ENCODE measurements at regions of chr7 and their contacts with region 1.

Region 1: DNA sequence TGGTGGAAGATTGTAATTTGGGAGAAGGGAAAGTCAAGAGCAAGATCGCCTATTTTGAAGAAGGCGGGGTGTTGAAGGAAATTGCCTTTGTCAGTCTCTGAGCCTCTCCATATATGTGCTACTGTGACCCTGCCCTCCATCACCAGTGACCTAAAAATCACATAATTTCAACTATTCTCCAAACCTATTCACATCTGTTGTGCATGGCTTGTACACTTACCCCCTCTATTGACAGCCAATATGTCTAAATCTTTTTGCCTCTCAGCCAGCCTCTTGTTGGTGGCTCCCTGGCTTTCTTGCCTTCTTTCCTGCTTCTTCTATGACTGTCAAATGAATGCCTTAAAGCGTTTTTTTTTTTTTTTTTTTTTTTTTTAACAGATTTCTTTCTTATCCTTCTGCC is 295.6 kb downstream of the AUTS2 start:
- DNase-seq: no peak
- ATAC-seq: peak; percentile 46
- H3K4me3 ChIP-seq: no peak overlapping the region
- H3K27ac ChIP-seq: no peak overlapping the region
- H3K4me1 ChIP-seq: peaks cover 34% of the 10 kb centered on the region
- H3K27me3 ChIP-seq: no peaks in the 10 kb centered on the region
- CTCF ChIP-seq: peak; percentile 53 to 74 (median 57); a peak in 5 of 6 replicates
- EP300 ChIP-seq: no peak
- POLR2A ChIP-seq: no peak
- RAD21 ChIP-seq: peak; percentile 88

Region 2: GRCh38 chr7:69837387-69838068 is 56.4 kb before region 1 on chr7:
- CTCF ChIA-PET with region 1: interaction called, 4 read pairs
- POLR2A ChIA-PET with region 1: no interaction called
- RAD21 ChIA-PET with region 1: interaction called, 3 read pairs
- SMC1A ChIA-PET with region 1: interaction called, 12 read pairs
- in situ Hi-C with region 1: no loop called
- intact Hi-C with region 1: no loop called
- DNase-seq: no peak
- ATAC-seq: no peak
- H3K4me3 ChIP-seq: no peak overlapping the region
- H3K27ac ChIP-seq: no peak overlapping the region
- H3K4me1 ChIP-seq: peaks cover 29% of the 10 kb centered on the region
- H3K27me3 ChIP-seq: no peaks in the 10 kb centered on the region
- CTCF ChIP-seq: no peak
- EP300 ChIP-seq: no peak
- POLR2A ChIP-seq: no peak
- RAD21 ChIP-seq: no peak

Region 3: DNA sequence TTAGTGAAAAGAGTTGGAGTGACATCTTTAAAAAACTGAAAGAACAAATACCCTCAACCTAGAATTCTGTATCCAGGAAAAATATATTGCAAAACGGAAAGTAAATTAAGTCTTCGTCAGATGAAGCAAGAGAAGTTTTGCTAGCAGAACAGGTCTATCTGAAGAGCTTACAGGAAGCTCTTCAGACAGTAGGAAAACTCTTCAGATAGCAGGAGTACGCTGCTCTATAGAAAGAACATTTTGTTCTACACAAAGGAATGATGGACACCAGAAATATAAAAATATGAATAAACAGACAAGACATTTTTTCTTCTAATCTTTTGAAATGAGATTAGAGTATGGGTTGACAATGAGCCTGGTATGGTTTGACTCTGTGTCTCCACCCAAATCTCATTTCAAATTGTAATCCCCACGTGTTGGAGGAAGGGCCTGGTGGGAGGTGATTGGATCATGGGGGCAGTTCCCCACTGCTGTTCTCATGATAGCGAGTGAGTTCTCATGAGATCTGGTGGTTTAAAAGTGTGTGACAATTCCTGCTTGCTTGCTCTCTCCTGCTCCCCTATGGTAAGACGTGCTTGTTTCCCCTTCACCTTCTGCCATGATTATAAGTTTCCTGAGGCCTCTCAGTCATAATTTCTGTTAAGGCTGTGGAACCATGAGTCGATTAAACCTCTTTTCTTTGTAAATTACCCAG is 271.7 kb after region 1 on chr7:
- CTCF ChIA-PET with region 1: no interaction called
- POLR2A ChIA-PET with region 1: no interaction called
- RAD21 ChIA-PET with region 1: no interaction called
- SMC1A ChIA-PET with region 1: no interaction called
- in situ Hi-C with region 1: no loop called
- intact Hi-C with region 1: loop called (anchors 10 kb)
- DNase-seq: no peak
- ATAC-seq: no peak
- H3K4me3 ChIP-seq: no peak overlapping the region
- H3K27ac ChIP-seq: no peak overlapping the region
- H3K4me1 ChIP-seq: no peaks in the 10 kb centered on the region
- H3K27me3 ChIP-seq: no peaks in the 10 kb centered on the region
- CTCF ChIP-seq: no peak
- EP300 ChIP-seq: no peak
- POLR2A ChIP-seq: no peak
- RAD21 ChIP-seq: no peak

Measured in GM12878 (cell line).